Naive thymus-derived CD8-positive, alpha-beta T cell (primary cell): ENCODE measurements at regions of chr5 and their contacts with region 1.

Region 1: GRCh38 chr5:140710899-140711552 is 10.8 kb downstream of the ZMAT2 start:
- DNase-seq: peak; percentile 36 to 95 (median 86)
- ATAC-seq: peak; percentile 86 to 87
- H3K4me3 Mint-ChIP-seq: peak overlapping the region; percentile 93 to 100 (median 99)
- H3K27ac Mint-ChIP-seq: peak overlapping the region; percentile 97 to 100 (median 98)
- H3K4me1 Mint-ChIP-seq: peaks cover 11 to 24% (median 18%) of the 10 kb centered on the region in 4 donors
- H3K27me3 Mint-ChIP-seq: no peaks in the 10 kb centered on the region

Region 2: GRCh38 chr5:140632150-140633020 is 78.6 kb before region 1 on chr5:
- POLR2A ChIA-PET with region 1: interaction called, 11 read pairs
- DNase-seq: peak; percentile 22 to 70 (median 44)
- ATAC-seq: peak; percentile 86 to 87
- H3K4me3 Mint-ChIP-seq: peak overlapping the region; percentile 87 to 94 (median 92)
- H3K27ac Mint-ChIP-seq: peak overlapping the region; percentile 70 to 96 (median 85)
- H3K4me1 Mint-ChIP-seq: peaks cover 13 to 35% (median 28%) of the 10 kb centered on the region in 4 donors
- H3K27me3 Mint-ChIP-seq: peaks cover 0 to 13% (median 2%) of the 10 kb centered on the region in 5 donors

Region 3: DNA sequence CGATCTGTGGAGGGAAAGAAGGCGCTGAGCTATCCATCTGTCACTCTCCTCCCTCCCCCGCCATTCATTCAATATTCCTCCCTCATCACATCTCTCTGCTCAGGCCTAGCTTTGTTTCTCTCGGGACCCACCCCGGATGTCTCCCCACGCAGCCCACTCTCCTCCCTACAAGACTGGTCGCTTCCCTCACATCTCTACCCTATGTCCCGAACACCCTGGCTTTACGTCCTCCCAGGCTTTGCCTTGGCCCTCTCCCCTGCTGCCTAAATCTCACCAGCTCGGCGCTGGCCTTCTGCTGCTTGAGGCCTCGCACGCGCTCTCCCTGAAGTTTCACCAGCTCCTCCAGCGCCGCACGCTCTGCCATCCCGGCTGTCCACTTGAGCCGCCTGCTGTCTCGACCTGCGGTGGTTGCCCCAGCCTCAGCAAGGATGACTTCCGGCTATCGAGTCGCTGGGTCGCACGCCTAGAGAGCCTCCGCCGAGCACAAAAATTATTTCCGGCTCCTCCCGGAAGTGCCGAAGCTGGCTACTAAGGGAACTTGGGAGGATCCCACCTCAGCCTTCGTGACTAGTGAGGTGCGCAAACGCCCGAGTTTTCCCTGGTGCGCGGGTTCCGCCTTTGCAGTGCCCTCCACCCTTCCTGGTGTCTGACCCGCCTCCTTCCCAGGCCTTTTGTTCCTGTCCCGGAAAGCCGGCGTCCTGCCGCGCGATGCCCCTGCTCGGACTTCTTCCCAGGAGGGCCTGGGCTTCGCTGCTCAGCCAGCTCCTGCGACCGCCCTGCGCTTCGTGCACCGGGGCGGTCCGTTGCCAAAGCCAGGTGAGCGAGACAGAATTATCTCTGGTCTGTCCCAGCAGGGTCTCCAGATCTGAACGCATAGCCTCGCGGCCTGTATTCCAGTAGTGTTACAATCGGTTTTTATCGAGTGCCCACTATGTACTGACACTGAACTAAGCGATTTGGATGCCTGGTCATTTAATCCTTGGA is 19.8 kb before region 1 on chr5 and contains the starts of genes HARS1 and HARS2:
- POLR2A ChIA-PET with region 1: interaction called, 44 read pairs
- DNase-seq: peak; percentile 60 to 87 (median 77)
- ATAC-seq: peak; percentile 92 to 94
- H3K4me3 Mint-ChIP-seq: peak within 1 kb of the TSS; percentile 99 to 100 (median 99)
- H3K27ac Mint-ChIP-seq: peak within 1 kb of the TSS; percentile 90 to 99 (median 98)
- H3K4me1 Mint-ChIP-seq: peaks cover 14 to 49% (median 46%) of the 10 kb centered on the region in 4 donors
- H3K27me3 Mint-ChIP-seq: no peaks in the 10 kb centered on the region
- polyA plus RNA-seq, gene HARS1: 63.2 to 77.5 (median 65.3) TPM
- polyA plus RNA-seq, gene HARS2: 15.4 to 24.6 (median 20.1) TPM

Region 4: DNA sequence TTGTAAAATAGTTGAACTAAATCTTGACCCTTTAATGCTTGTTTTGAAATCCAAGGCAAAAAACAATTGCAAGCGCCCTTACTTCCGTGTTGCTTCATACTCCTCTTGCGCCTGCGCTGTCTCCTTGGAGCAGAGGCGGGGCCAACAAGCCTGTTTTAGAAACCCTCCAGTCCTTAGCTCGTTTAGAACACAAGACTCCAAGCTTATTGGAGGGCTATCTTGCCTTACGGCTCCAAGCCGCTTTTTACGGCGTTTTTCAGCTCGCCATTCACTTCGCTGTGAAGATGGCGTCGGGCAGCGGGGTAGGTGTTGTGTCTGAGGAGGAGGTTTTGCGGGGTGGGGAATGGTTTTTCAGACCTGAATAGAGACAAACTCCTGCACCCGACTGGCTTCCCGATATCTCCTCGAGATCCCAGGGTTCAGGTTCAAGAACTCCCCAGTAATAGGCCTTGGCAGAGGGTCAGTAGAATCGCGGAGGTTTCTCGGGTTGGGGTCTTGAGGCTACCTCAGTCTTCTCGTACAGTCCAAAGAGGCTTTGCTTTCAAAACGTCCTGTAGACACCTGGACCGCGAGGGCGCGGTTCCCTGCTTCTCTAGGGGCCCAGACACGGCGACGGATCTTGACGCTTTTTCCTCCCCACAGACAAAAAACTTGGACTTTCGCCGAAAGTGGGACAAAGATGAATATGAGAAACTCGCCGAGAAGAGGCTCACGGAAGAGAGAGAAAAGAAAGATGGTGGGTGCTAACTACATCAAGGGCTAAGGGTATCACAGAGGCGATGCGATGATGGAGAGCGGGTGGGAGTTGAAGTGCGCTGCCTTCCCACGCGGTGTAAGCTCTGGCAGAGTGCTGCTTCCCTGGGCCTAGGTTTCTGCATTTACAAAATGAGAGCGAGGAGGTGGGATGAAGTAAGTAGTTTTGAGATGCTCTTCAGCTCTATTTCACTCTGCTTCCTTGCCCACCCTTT is 10.6 kb before region 1 on chr5 and contains the start of gene ZMAT2:
- POLR2A ChIA-PET with region 1: interaction called, 41 read pairs
- DNase-seq: peak; percentile 79 to 97 (median 92)
- ATAC-seq: peak; percentile 97 to 98
- H3K4me3 Mint-ChIP-seq: peak within 1 kb of the TSS; percentile 91 to 100 (median 98)
- H3K27ac Mint-ChIP-seq: peak within 1 kb of the TSS; percentile 93 to 99 (median 98)
- H3K4me1 Mint-ChIP-seq: peaks cover 23 to 33% (median 31%) of the 10 kb centered on the region in 4 donors
- H3K27me3 Mint-ChIP-seq: no peaks in the 10 kb centered on the region
- polyA plus RNA-seq, gene ZMAT2: 64.2 to 81.3 (median 77.0) TPM

Region 5: DNA sequence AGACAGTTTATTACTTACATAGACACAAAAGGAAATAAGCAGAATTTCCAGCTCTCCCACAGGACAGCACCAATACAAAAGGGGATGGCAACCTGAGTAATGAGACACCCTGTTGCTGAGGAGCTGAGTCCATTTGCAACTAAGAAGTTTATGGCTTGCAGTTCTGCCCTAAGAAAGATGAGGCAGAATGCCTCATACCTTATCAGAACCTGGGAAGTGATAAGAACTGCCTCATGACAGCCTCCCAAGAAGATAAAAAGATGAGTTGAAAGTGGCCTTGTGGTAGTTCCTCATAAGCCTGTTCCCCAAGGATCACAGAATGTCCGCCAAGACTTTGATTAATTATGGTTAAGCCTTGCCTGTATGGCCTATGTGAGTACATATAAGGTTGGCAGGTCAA is 30.9 kb after region 1 on chr5:
- POLR2A ChIA-PET with region 1: no interaction called
- DNase-seq: no peak
- ATAC-seq: no peak
- H3K4me3 Mint-ChIP-seq: no peak overlapping the region
- H3K27ac Mint-ChIP-seq: no peak overlapping the region
- H3K4me1 Mint-ChIP-seq: no peaks in the 10 kb centered on the region
- H3K27me3 Mint-ChIP-seq: peaks cover 7 to 28% (median 17%) of the 10 kb centered on the region in 5 donors